CD8-positive, alpha-beta T cell (primary cell): ENCODE measurements at regions of chrX and their contacts with region 1.

Region 1: DNA sequence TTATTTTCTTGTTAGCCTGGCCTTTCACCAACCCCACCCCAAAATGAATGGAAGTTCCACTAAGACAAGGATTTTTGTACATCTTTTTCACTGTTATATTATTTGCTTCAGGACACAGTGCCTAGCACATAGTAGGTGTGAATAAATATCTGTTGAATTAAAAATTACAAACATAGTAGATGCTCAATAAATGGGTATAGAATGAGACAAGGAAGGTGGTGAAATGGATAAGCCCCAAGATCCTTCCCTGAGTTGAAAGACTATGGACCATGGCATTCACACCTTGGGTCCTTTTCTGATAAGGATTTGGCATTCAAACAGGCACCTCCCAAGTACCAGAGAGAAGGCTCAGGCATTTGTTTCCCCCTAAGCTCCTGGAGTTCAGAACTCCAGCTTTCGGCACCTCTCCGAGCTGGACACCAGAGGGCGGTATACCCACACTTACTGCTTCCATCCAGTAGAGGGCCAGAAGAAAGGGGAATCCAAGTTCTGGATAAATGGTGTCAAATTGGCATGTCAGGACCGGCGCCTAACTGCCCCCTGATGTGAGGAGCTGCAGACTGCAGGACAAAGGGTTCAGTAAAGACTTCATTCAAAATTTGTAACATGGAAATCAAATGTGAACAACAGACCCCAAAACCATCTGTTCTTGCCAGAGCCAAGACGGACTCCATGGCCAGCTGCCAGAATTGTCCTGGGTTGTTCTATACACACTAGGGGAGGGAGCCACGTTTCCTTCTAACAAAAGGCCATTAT is 193.0 kb downstream of the GPC3 start:
- DNase-seq: peak; percentile 17 to 71 (median 42)
- ATAC-seq: peak; percentile 51
- H3K4me3 ChIP-seq: no peak overlapping the region
- H3K4me3 Mint-ChIP-seq: no peak overlapping the region
- H3K27ac ChIP-seq: no peak overlapping the region
- H3K27ac Mint-ChIP-seq: no peak overlapping the region
- H3K4me1 ChIP-seq: no peaks in the 10 kb centered on the region
- H3K4me1 Mint-ChIP-seq: no peaks in the 10 kb centered on the region
- H3K27me3 ChIP-seq: no peaks in the 10 kb centered on the region
- H3K27me3 Mint-ChIP-seq: no peaks in the 10 kb centered on the region
- CTCF ChIP-seq: peak; percentile 84

Region 2: DNA sequence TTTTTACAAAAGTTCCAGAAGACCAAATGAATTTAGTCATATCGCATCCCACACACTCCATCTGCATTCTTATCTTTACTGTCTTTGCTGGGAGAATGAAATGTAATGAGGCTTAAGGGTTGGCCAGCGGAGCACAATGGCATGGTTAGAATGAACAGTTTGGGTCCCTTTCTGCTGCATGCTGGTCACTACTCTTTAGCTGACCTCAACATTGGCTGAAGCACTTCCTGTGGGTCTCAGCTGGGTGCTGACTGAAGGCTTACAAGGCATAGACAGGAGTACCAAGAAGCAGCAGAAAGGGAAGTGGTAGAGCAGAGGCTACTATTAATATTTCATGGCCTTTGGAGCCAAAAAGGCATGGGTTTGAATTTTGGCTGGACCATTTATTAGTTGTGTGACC is 217.7 kb before region 1 on chrX:
- CTCF ChIA-PET with region 1: no interaction called
- POLR2A ChIA-PET with region 1: no interaction called
- intact Hi-C with region 1: no loop called
- DNase-seq: no peak
- ATAC-seq: no peak
- H3K4me3 ChIP-seq: no peak overlapping the region
- H3K4me3 Mint-ChIP-seq: no peak overlapping the region
- H3K27ac ChIP-seq: no peak overlapping the region
- H3K27ac Mint-ChIP-seq: no peak overlapping the region
- H3K4me1 ChIP-seq: no peaks in the 10 kb centered on the region
- H3K4me1 Mint-ChIP-seq: no peaks in the 10 kb centered on the region
- H3K27me3 ChIP-seq: no peaks in the 10 kb centered on the region
- H3K27me3 Mint-ChIP-seq: no peaks in the 10 kb centered on the region
- CTCF ChIP-seq: no peak

Region 3: GRCh38 chrX:134186362-134187121 is 394.2 kb after region 1 on chrX:
- CTCF ChIA-PET with region 1: no interaction called
- POLR2A ChIA-PET with region 1: no interaction called
- intact Hi-C with region 1: loop called in 1 of 2 experiments (anchors 5 kb)
- DNase-seq: peak in 8 of 9 experiments; percentile 11 to 80 (median 52)
- ATAC-seq: peak; percentile 79
- H3K4me3 ChIP-seq: no peak overlapping the region
- H3K4me3 Mint-ChIP-seq: peak overlapping the region; percentile 63
- H3K27ac ChIP-seq: no peak overlapping the region
- H3K27ac Mint-ChIP-seq: no peak overlapping the region
- H3K4me1 ChIP-seq: peaks cover 18% of the 10 kb centered on the region
- H3K4me1 Mint-ChIP-seq: peaks cover 26% of the 10 kb centered on the region
- H3K27me3 ChIP-seq: no peaks in the 10 kb centered on the region
- H3K27me3 Mint-ChIP-seq: no peaks in the 10 kb centered on the region
- CTCF ChIP-seq: peak; percentile 38

Region 4: DNA sequence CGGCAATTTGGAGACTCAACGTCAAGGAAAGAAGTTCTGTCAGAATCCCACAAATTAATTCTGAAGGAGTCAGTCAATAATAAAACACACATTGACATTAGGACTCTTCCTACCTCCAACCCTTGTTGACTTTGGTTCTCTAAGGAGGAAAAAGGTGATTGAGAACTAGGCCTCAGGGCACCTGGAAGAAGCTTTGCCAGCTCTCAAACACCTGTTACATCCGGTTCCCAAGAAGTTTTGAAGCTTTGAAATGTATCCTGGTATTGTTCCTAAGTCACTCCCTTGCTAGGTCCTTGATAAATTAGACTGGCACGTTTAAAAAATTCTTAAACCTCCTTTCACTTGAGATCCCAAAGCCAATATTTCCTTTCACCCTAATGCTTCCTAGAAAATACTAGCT is 442.9 kb after region 1 on chrX:
- CTCF ChIA-PET with region 1: no interaction called
- POLR2A ChIA-PET with region 1: no interaction called
- intact Hi-C with region 1: no loop called
- DNase-seq: no peak
- ATAC-seq: no peak
- H3K4me3 ChIP-seq: no peak overlapping the region
- H3K4me3 Mint-ChIP-seq: no peak overlapping the region
- H3K27ac ChIP-seq: no peak overlapping the region
- H3K27ac Mint-ChIP-seq: no peak overlapping the region
- H3K4me1 ChIP-seq: no peaks in the 10 kb centered on the region
- H3K4me1 Mint-ChIP-seq: peaks cover 2% of the 10 kb centered on the region
- H3K27me3 ChIP-seq: no peaks in the 10 kb centered on the region
- H3K27me3 Mint-ChIP-seq: peaks cover 19% of the 10 kb centered on the region
- CTCF ChIP-seq: no peak

Region 5: GRCh38 chrX:134396174-134396573 is 603.8 kb after region 1 on chrX:
- CTCF ChIA-PET with region 1: interaction called, 39 read pairs
- POLR2A ChIA-PET with region 1: no interaction called
- intact Hi-C with region 1: loop called in 1 of 2 experiments (anchors 2 kb)
- DNase-seq: peak in 2 of 9 experiments; percentile 14 to 33
- ATAC-seq: no peak
- H3K4me3 ChIP-seq: no peak overlapping the region
- H3K4me3 Mint-ChIP-seq: no peak overlapping the region
- H3K27ac ChIP-seq: no peak overlapping the region
- H3K27ac Mint-ChIP-seq: no peak overlapping the region
- H3K4me1 ChIP-seq: no peaks in the 10 kb centered on the region
- H3K4me1 Mint-ChIP-seq: no peaks in the 10 kb centered on the region
- H3K27me3 ChIP-seq: no peaks in the 10 kb centered on the region
- H3K27me3 Mint-ChIP-seq: no peaks in the 10 kb centered on the region
- CTCF ChIP-seq: peak; percentile 57

Region 6: GRCh38 chrX:134570899-134571298 is 778.5 kb after region 1 on chrX:
- CTCF ChIA-PET with region 1: no interaction called
- POLR2A ChIA-PET with region 1: no interaction called
- intact Hi-C with region 1: no loop called
- DNase-seq: no peak
- ATAC-seq: no peak
- H3K4me3 ChIP-seq: no peak overlapping the region
- H3K4me3 Mint-ChIP-seq: no peak overlapping the region
- H3K27ac ChIP-seq: no peak overlapping the region
- H3K27ac Mint-ChIP-seq: no peak overlapping the region
- H3K4me1 ChIP-seq: no peaks in the 10 kb centered on the region
- H3K4me1 Mint-ChIP-seq: peaks cover 4% of the 10 kb centered on the region
- H3K27me3 ChIP-seq: no peaks in the 10 kb centered on the region
- H3K27me3 Mint-ChIP-seq: no peaks in the 10 kb centered on the region
- CTCF ChIP-seq: no peak

Region 7: DNA sequence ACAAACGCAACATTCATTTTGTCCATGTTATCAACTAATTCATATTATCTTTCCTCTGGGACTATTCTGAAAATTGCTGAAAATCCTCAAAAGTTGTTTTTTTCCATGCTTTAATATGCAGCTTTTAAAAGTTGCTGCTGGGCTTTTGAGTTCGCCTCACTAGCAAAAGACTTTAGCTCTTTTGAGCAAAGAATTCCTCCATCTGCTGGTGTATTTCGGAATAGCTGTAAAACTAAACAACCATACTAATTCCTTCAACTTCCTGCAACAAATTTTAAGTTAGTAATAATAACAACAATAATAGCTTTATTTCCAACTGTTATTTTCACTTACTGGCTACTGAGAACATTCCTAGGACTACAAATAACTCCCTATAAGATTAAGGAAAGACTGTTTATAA is 990.4 kb after region 1 on chrX:
- CTCF ChIA-PET with region 1: no interaction called
- POLR2A ChIA-PET with region 1: no interaction called
- intact Hi-C with region 1: loop called in 1 of 2 experiments (anchors 10 kb)
- DNase-seq: peak in 2 of 9 experiments; percentile 12 to 27
- ATAC-seq: no peak
- H3K4me3 ChIP-seq: no peak overlapping the region
- H3K4me3 Mint-ChIP-seq: no peak overlapping the region
- H3K27ac ChIP-seq: no peak overlapping the region
- H3K27ac Mint-ChIP-seq: no peak overlapping the region
- H3K4me1 ChIP-seq: no peaks in the 10 kb centered on the region
- H3K4me1 Mint-ChIP-seq: no peaks in the 10 kb centered on the region
- H3K27me3 ChIP-seq: no peaks in the 10 kb centered on the region
- H3K27me3 Mint-ChIP-seq: no peaks in the 10 kb centered on the region
- CTCF ChIP-seq: no peak